ENCODE measurements at regions of chr7 and their contacts with region 1.

Region 1: GRCh38 chr7:65006094-65006992 is at the start of gene ERV3-1:
- DNase-seq: peak; percentile 91 to 98 (median 93)
- H3K4me3 ChIP-seq: peak within 1 kb of the TSS; percentile 79 to 95
- H3K4me3 Mint-ChIP-seq: peak within 1 kb of the TSS; percentile 93 to 97 (median 96)
- H3K27ac ChIP-seq: peak within 1 kb of the TSS; percentile 84
- H3K27ac Mint-ChIP-seq: peak within 1 kb of the TSS; percentile 90 to 98 (median 97)
- H3K4me1 ChIP-seq: peaks cover 30% of the 10 kb centered on the region
- H3K4me1 Mint-ChIP-seq: peaks cover 29 to 52% (median 42%) of the 10 kb centered on the region in 4 donors
- H3K27me3 ChIP-seq: no peaks in the 10 kb centered on the region
- H3K27me3 Mint-ChIP-seq: no peaks in the 10 kb centered on the region
- total RNA-seq, gene ERV3-1: 18.4 to 19.9 TPM

Region 2: DNA sequence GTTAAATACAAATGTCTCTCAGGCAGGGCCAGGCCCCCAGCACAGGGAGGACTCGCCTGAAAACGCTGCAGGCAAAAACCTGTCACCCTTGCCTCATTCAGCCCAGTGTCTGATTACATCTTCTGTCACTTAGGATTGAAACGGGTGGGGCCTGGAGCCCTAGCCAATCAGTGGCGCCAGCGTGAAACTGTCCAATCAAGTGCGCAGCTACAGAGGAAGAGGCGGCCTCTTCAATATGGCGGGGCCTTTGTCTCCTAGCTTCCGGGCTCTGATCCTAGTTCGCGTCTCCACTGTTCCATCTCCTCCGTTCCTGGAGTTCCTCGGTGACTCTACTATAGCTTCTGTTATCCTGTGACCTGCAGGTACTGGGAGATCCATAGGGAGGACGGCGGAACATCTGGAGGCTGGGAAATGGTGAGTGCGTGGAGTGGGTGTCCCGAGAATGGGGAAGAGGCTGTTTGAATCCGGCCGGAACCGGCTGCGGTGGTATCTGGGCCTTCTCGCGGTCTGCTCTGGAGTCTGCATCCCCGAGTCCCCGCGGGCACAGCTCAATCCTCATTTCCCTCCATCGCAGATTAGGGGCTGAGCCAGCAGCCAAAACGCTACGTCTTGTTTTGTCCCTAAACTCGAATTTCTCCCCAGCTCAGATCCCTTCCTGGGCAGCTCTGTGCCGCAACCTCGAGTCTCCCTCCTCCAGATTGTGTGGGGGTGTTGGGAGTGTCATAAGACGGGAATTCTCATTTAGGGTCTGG is 692.4 kb before region 1 on chr7 and contains the start of gene ZNF736:
- CTCF ChIA-PET with region 1: no interaction called
- POLR2A ChIA-PET with region 1: interaction called, 14 read pairs
- intact Hi-C with region 1: no loop called
- DNase-seq: peak; percentile 87 to 93 (median 89)
- H3K4me3 ChIP-seq: peak within 1 kb of the TSS; percentile 88 to 97
- H3K4me3 Mint-ChIP-seq: peak within 1 kb of the TSS; percentile 98 to 99 (median 99)
- H3K27ac ChIP-seq: peak within 1 kb of the TSS; percentile 59
- H3K27ac Mint-ChIP-seq: peak within 1 kb of the TSS; percentile 96 to 99 (median 98)
- H3K4me1 ChIP-seq: peaks cover 27% of the 10 kb centered on the region
- H3K4me1 Mint-ChIP-seq: peaks cover 16 to 50% (median 36%) of the 10 kb centered on the region in 4 donors
- H3K27me3 ChIP-seq: no peaks in the 10 kb centered on the region
- H3K27me3 Mint-ChIP-seq: no peaks in the 10 kb centered on the region
- total RNA-seq, gene ZNF736: 43.6 to 48.2 TPM

Region 3: GRCh38 chr7:64794171-64794844 is 212.0 kb before region 1 on chr7 and contains the start of gene ZNF138:
- CTCF ChIA-PET with region 1: no interaction called
- POLR2A ChIA-PET with region 1: interaction called, 10 read pairs
- intact Hi-C with region 1: loop called (anchors 10 kb)
- DNase-seq: peak; percentile 92 to 95 (median 93)
- H3K4me3 ChIP-seq: peak within 1 kb of the TSS; percentile 87 to 95
- H3K4me3 Mint-ChIP-seq: peak within 1 kb of the TSS; percentile 97 to 99 (median 99)
- H3K27ac ChIP-seq: peak within 1 kb of the TSS; percentile 75
- H3K27ac Mint-ChIP-seq: peak within 1 kb of the TSS; percentile 97 to 99 (median 98)
- H3K4me1 ChIP-seq: peaks cover 27% of the 10 kb centered on the region
- H3K4me1 Mint-ChIP-seq: peaks cover 18 to 47% (median 30%) of the 10 kb centered on the region in 4 donors
- H3K27me3 ChIP-seq: no peaks in the 10 kb centered on the region
- H3K27me3 Mint-ChIP-seq: no peaks in the 10 kb centered on the region
- total RNA-seq, gene ZNF138: 12.1 to 14.3 TPM

Region 4: GRCh38 chr7:64902806-64903721 is 103.3 kb before region 1 on chr7 and contains the start of gene ZNF273:
- CTCF ChIA-PET with region 1: no interaction called
- POLR2A ChIA-PET with region 1: interaction called, 20 read pairs
- intact Hi-C with region 1: loop called (anchors 2 kb)
- DNase-seq: peak; percentile 89 to 95 (median 90)
- H3K4me3 ChIP-seq: peak within 1 kb of the TSS; percentile 67 to 71
- H3K4me3 Mint-ChIP-seq: peak within 1 kb of the TSS; percentile 96 to 98 (median 98)
- H3K27ac ChIP-seq: peak within 1 kb of the TSS; percentile 79
- H3K27ac Mint-ChIP-seq: peak within 1 kb of the TSS; percentile 92 to 97 (median 96)
- H3K4me1 ChIP-seq: peaks cover 43% of the 10 kb centered on the region
- H3K4me1 Mint-ChIP-seq: peaks cover 32 to 53% (median 39%) of the 10 kb centered on the region in 4 donors
- H3K27me3 ChIP-seq: no peaks in the 10 kb centered on the region
- H3K27me3 Mint-ChIP-seq: no peaks in the 10 kb centered on the region
- total RNA-seq, gene ZNF273: 8.3 to 8.9 TPM

Region 5: DNA sequence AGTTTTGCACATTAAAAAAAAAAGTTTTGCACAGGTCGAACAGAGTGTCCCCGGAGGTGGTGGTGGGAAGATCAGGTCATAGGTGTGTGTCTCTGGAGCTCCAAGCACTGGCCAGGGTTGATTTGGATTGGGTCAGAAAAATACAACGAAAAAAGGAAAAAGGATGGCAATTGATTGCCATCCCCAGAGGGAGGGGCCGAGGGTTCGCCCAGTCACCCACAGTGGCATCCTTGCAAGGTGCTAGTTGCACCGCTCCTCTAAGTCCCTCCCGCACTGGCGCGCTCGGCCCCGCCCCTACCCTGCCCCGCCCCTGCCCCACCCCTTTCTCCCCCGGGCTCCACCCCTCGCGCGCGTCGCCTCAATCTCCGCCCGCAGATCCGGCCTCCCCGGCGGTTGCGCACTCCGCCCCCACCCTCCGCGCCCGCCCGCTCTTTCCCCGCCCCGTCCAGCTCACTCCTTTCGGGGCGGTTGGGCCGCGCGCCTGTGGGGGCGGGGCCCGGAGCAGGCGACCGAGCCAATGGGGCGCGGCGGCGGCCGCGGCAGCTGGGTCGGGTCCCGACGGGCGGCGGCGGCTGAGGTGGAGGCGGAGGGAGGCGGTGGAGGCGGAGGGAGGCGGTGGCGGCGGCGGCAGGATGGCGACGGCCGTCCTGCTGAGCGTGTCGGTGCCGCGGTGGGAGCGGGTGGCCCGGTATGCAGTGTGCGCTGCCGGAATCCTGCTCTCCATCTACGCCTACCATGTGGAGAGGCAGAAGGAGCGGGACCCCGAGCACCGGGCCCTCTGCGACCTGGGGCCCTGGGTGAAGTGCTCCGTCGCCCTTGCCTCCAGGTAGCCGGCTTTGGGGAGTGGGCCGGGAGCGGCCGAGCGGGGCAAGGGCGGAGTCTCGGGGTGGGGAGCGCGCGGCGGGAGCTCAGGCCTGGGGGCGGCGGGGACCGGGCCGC is 31.7 kb after region 1 on chr7:
- CTCF ChIA-PET with region 1: interaction called, 12 read pairs
- POLR2A ChIA-PET with region 1: interaction called, 34 read pairs
- intact Hi-C with region 1: loop called (anchors 1 kb)
- DNase-seq: peak; percentile 90 to 94 (median 92)
- H3K4me3 ChIP-seq: peak overlapping the region in 1 of 2 donors; percentile 43
- H3K4me3 Mint-ChIP-seq: peak overlapping the region; percentile 68 to 85 (median 81)
- H3K27ac ChIP-seq: peak overlapping the region; percentile 56
- H3K27ac Mint-ChIP-seq: peak overlapping the region; percentile 79 to 93 (median 90)
- H3K4me1 ChIP-seq: peaks cover 14% of the 10 kb centered on the region
- H3K4me1 Mint-ChIP-seq: peaks cover 10 to 17% (median 14%) of the 10 kb centered on the region in 4 donors
- H3K27me3 ChIP-seq: no peaks in the 10 kb centered on the region
- H3K27me3 Mint-ChIP-seq: no peaks in the 10 kb centered on the region

Measured in CD4-positive, alpha-beta memory T cell (primary cell).